HAP-1 (cell line): ENCODE measurements at regions of chr19 and their contacts with region 1.

Region 1: GRCh38 chr19:5803752-5804515 is 933 bp upstream of the NRTN start:
- DNase-seq: peak; percentile 85 to 98
- H3K4me3 ChIP-seq: peak overlapping the region; percentile 27
- H3K4me1 ChIP-seq: peaks cover 13% of the 10 kb centered on the region
- H3K27me3 ChIP-seq: no peaks in the 10 kb centered on the region

Region 2: DNA sequence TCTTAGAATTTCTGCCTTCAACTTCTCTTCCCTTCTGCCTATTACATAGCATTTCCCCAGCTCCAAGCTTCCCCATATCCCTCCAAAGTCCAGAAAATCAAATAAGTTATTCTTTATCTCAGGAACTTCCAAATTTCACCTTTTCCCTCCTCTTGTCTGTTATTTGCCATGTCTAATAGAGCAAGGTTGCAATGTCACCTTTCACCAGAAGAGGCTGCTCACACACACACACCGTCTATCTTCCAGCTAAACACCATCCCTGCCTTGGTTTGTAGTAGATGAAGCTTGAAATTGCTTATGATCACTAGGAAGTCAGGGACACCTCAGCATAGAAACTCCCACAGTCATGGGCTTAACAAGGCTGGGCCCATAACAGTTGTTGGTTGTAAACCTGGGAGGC is 300.3 kb before region 1 on chr19:
- in situ Hi-C with region 1: no loop called
- DNase-seq: no peak
- H3K4me3 ChIP-seq: no peak overlapping the region
- H3K4me1 ChIP-seq: no peaks in the 10 kb centered on the region
- H3K27me3 ChIP-seq: no peaks in the 10 kb centered on the region

Region 3: DNA sequence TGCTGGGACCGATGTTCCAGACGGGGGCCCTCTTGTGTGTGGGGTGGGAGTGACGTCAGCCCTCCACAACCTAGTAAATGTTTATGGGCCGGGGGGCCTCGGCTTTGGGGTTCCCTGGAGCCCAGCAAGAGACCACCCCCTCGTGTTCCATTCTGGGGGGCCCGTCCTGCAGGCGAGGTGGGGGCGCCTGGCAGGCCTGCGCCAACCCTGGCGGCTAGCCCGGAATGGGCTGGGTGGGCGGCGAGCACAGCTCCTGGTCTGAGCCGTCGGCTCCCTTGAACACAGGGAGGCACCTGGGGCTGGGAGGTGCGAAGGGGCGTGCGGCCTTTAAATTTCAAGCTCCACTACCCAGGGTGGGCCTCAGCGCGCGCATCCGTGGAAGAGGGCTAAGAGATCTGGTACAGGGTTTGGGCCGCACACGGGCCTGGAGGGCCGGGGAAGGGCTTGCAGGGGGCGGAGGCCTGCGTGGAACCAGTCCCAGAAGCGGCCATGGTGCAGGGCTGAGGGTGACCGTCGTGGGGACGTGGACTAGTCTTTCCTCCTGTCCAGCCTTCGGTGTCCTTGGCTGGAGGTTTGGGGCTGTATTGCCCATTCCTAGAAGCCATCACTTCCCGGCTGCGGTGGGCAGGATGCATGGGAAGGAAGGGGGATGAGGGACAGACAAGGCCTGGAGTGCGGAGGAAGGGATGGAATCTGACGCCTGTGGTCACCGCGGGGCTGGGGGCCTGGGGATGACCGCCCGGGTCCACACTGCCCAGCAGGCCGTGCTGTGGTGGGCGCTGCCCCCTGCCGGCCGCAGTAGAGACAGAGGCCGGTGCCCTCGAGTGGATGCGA is 88.2 kb after region 1 on chr19:
- in situ Hi-C with region 1: loop called (anchors 5 kb)
- DNase-seq: peak; percentile 26 to 65
- H3K4me3 ChIP-seq: no peak overlapping the region
- H3K4me1 ChIP-seq: no peaks in the 10 kb centered on the region
- H3K27me3 ChIP-seq: no peaks in the 10 kb centered on the region

Region 4: GRCh38 chr19:6021878-6022569 is 218.1 kb after region 1 on chr19:
- in situ Hi-C with region 1: loop called (anchors 5 kb)
- DNase-seq: peak; percentile 77 to 93
- H3K4me3 ChIP-seq: no peak overlapping the region
- H3K4me1 ChIP-seq: peaks cover 2% of the 10 kb centered on the region; the same call in 1 of the 2 replicates
- H3K27me3 ChIP-seq: no peaks in the 10 kb centered on the region; the same call in 1 of the 2 replicates